HCT116 (cell line): ENCODE measurements at regions of chr3 and their contacts with region 1.

Region 1: DNA sequence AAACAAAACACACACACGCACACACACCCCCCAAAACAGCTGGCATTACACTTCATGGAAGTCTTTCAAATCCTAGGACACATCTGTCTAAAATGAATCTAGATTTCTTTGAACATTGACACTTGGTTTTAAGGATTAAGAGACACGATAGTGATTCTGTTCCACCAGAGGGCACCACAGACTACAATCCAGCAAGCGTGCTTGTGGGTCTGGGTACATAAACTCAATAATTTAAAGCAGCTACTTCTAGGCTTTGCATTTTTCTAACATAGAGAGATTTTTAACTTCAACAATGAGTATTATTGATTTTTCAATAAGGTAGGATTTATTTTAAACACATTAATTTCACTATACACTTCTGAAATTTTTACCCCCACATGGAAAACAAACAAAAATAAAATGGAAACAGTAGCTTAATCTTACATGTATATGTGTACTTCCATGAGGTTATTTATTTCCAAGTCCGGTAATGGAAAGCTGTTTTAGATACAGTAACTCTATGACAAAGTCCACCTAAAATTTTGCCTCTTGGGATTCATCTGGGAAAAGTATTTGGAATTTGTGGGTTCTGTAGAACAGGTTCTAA is 564.0 kb upstream of the TGFBR2 start:
- DNase-seq: peak; percentile 76
- ATAC-seq: peak; percentile 84
- H3K4me3 ChIP-seq: no peak overlapping the region
- H3K27ac ChIP-seq: no peak overlapping the region
- H3K4me1 ChIP-seq: no peaks in the 10 kb centered on the region
- H3K27me3 ChIP-seq: no peaks in the 10 kb centered on the region
- CTCF ChIP-seq: peak; percentile 60 to 83 (median 79)
- POLR2A ChIP-seq: no peak
- RAD21 ChIP-seq: peak; percentile 93

Region 2: GRCh38 chr3:30012941-30013543 is 29.3 kb before region 1 on chr3:
- CTCF ChIA-PET with region 1: interaction called, 13 read pairs
- POLR2A ChIA-PET with region 1: no interaction called
- RAD21 ChIA-PET with region 1: no interaction called
- intact Hi-C with region 1: no loop called
- DNase-seq: peak; percentile 64
- ATAC-seq: peak; percentile 93
- H3K4me3 ChIP-seq: no peak overlapping the region
- H3K27ac ChIP-seq: no peak overlapping the region
- H3K4me1 ChIP-seq: no peaks in the 10 kb centered on the region
- H3K27me3 ChIP-seq: no peaks in the 10 kb centered on the region
- CTCF ChIP-seq: peak; percentile 38 to 83 (median 62); a peak in 5 of 6 replicates
- POLR2A ChIP-seq: no peak
- RAD21 ChIP-seq: peak; percentile 85

Region 3: GRCh38 chr3:30628901-30629590 is 586.7 kb after region 1 on chr3:
- CTCF ChIA-PET with region 1: no interaction called
- POLR2A ChIA-PET with region 1: no interaction called
- RAD21 ChIA-PET with region 1: no interaction called
- intact Hi-C with region 1: loop called (anchors 10 kb)
- DNase-seq: no peak
- ATAC-seq: no peak
- H3K4me3 ChIP-seq: no peak overlapping the region
- H3K27ac ChIP-seq: peak overlapping the region; percentile 60
- H3K4me1 ChIP-seq: peaks cover 93 to 94% of the 10 kb centered on the region in 2 experiments
- H3K27me3 ChIP-seq: no peaks in the 10 kb centered on the region
- CTCF ChIP-seq: peak in 2 of 3 experiments; percentile 23 to 39; a peak in 3 of 6 replicates
- POLR2A ChIP-seq: no peak
- RAD21 ChIP-seq: peak; percentile 44; the same call in 1 of the 2 replicates